HEK293 (cell line): ENCODE measurements at regions of chr11 and their contacts with region 1.

Region 1: DNA sequence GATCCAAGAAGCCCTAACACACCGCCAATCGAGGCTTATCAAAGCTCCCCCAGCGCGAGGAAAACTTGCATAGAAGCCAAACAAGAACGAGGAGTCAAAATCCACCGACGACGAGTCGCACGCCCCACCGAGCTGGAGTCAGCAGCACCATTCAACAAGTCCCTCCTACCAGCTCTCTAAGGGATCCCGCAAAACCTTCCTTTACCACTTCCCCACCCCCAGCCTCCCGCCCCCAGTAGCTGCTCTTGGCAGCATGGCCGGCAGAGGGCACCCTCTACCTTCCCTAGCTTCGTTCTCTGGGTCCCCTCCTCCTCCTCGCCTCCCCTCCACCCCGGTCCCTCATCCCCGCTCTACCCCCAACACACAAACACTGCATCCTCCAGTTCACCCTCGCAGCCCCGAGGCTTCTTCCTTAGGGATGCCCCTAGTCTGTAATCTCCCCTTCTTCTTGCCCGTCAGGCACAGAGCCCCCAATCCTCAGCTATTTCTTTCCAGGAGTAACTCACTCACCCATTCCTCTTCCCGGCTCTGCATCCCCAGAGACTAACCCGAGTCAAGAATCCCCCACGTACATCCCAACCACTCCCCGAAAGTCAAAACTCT is 1.3 kb downstream of the BDNF start:
- H3K4me3 ChIP-seq: peak overlapping the region; percentile 88
- H3K27ac ChIP-seq: no peak overlapping the region; the same call in 1 of the 2 replicates
- H3K4me1 ChIP-seq: no peaks in the 10 kb centered on the region
- CTCF ChIP-seq: peak; percentile 67

Region 2: DNA sequence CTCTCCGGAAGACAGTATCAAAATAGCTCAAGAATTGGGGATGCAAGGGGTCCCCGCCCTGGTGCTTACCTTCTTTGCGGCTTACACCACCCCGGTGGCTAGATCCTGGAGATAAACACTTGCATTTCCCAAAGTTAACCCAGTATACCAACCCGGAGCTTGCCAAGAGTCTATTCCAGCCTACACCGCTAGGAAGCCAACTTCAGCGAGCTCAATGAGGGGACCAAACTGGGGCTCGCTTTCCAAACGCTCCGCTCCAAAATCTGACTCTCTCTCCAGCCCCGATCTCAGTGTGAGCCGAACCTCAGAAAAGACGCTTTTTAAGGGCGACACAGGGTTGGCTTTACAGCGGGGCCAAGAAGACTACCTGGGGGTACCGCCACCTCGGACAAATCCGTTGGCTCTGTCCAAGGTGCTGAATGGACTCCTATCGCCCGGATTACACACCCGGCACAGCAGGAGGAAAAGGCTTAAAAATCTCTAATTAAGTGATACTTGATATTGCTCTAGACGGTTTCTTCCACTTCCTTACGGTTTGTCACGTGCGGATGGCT is 21.4 kb after region 1 on chr11:
- CTCF ChIA-PET with region 1: interaction called, 23 read pairs
- POLR2A ChIA-PET with region 1: interaction called, 9 read pairs
- H3K4me3 ChIP-seq: no peak overlapping the region
- H3K27ac ChIP-seq: no peak overlapping the region
- H3K4me1 ChIP-seq: peaks cover 5% of the 10 kb centered on the region; the same call in 1 of the 2 replicates
- CTCF ChIP-seq: no peak

Region 3: DNA sequence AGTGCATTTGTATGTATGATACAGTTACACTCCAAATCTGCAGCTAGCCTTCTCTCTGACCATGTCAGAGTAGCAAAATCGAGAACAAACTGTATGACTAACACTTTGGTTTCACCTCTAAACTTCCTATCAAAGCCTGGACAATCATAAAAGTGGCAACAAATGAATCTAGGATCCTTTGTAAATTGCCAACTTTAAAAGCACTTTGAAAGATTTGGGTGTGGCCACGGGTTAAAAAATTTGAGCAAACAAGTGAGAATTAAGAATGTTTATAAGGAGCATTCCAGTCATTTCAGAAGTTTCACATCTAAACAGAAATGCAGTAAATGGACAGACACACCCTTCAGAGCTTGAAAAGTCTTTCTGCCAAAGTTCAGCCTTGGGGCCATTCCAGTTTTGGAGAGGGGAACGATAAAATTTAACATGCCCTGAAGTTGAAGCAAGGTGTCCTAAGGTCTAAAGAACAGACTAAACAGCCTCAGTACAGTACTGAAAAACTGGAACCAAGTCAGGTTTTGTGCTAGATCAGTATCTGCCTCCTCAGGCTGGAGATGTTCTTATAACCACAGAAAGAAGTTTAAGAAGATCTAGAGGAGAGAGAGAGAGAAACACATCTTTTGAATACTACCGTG is 183.2 kb after region 1 on chr11:
- CTCF ChIA-PET with region 1: no interaction called
- POLR2A ChIA-PET with region 1: no interaction called
- H3K4me3 ChIP-seq: no peak overlapping the region
- H3K27ac ChIP-seq: no peak overlapping the region
- H3K4me1 ChIP-seq: no peaks in the 10 kb centered on the region
- CTCF ChIP-seq: no peak

Region 4: DNA sequence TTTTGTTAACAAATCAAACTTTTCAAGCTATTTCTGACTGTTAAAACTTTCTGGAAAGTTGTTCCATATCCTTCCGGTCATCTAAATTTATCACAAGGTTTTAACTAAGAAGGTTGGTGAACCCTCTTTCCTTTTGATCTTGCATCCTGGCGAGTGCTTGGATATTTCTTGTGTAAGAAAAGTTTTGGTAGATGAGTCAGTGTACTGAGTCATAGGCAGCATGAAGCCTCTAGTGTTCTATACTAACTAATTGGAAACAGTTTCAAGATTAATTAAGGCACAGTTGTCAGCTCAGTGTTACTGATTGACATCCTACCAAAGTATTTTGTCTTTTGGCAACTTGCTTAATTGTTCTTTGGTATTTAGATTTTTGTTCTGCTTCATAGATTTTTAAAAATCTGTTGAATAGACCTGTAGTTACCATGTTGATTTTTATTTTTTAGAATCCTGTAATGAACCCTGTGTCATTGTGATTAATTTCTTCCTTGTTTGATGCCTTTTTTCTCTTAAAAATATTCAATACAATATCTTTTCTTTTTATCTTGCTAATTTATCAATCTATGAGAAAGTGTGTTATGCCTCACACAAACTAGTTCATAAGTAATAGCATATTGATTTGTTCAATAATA is 447.3 kb after region 1 on chr11:
- CTCF ChIA-PET with region 1: no interaction called
- POLR2A ChIA-PET with region 1: no interaction called
- H3K4me3 ChIP-seq: no peak overlapping the region
- H3K27ac ChIP-seq: no peak overlapping the region
- H3K4me1 ChIP-seq: no peaks in the 10 kb centered on the region; the same call in 1 of the 2 replicates
- CTCF ChIP-seq: no peak

Region 5: DNA sequence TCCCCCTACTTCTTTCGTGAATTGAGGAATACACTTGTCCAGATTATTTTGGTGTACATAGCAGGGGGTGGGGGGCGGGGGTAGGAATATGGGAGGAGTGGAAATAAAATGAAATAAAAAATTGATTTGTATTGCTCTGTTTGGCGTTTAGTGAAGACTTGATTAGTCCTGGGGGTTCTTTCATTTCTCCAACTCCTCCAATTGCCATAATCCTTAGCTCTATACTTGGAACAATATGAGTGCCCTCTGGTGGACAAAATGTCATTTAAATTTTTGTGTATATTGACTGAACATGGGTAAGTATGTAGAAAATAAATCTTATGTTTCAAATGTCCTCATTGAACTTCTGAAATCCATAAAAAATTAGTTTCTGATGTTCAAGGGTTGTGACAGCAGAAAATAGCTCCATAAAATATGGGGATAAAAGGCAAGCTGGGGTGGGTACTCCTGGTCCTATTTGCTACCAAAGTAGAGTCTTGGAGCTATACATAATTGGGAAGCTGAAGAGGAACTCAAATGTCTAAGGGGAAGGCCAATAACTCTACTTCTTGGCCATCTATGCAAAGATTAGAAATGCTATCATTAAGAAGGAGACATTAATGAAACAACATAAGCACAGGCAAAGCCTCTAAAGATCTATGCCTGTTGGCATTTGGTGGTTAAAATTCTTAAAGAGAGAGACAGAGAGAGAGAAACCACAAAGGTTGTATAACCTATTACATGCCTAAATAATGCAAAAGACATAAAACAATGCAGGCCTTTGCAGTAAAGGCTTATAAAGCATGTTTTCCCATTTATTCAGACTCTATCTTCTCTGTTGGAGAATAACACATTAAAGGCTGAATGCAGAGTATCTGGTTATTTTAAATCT is 830.8 kb after region 1 on chr11:
- CTCF ChIA-PET with region 1: interaction called, 21 read pairs
- POLR2A ChIA-PET with region 1: no interaction called
- H3K4me3 ChIP-seq: no peak overlapping the region
- H3K27ac ChIP-seq: no peak overlapping the region
- H3K4me1 ChIP-seq: no peaks in the 10 kb centered on the region
- CTCF ChIP-seq: no peak

Region 6: DNA sequence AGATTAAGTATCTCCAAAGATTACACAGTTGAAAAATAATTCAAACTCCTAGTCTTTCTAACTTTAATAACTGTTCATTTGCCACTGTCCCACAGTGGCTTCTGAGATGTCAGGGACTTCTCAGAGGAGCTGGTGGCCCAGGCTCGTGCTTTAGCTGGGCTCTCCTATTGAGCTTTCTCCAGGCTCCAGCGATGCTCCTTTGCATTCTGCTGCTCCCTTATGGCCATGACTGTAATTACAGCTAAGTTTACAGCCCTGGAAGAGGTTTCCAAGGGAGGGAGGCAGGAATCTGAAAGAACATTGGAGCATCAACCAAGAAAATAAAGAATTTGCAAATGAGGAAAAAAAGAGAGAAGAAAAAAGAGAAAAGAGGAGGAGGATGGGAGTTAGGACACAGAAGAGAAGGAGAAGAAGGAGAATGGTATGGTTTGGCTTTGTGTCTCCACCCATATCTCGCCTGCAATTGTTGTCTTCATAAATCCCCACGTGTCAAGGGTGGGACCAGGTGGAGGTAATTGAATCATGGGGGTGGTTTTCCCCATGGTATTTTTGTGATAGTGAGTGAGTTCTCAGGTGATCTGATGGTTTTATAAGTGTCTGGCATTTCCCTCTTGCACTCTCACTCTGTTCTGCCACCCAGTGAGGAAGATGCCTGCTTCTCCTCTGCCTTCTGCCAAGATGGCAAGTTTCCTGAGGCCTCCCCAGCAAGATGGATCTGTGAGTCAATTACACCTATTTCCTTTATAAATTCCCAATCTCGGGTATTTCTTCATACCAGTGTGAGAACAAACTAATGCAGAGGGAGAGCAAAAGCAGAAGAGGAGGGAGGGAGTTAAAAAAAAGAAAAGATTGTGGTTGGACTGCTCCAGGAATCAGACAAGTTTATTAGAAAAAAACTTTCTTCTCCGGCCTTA is 1460.8 kb after region 1 on chr11:
- CTCF ChIA-PET with region 1: interaction called, 10 read pairs
- POLR2A ChIA-PET with region 1: no interaction called
- H3K4me3 ChIP-seq: no peak overlapping the region
- H3K27ac ChIP-seq: no peak overlapping the region
- H3K4me1 ChIP-seq: no peaks in the 10 kb centered on the region
- CTCF ChIP-seq: 0 out of 2 replicates have a peak, but pooled peaks have one; percentile 11

Region 7: DNA sequence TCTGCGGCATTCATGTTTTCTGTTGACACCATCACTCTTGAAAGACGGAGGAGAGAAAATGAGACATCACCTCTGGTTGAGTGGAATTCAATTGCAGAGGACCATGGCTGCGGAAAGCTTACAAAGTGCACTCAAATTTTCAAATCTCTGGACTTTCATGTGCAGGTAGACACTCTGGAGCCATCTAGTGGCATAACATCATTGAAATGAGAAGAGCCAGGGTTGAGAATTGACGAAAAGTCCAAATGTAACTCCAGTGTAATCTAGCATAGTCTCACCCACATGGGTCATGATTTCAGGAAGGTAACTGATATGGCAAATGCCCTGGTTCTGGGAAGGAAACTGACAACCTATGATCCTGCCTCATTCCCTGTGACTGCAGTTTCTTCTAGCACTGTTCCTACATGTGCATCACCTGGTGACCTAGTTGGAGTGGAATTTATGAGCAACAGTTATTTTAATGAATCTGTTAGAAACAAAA is 1630.0 kb after region 1 on chr11:
- CTCF ChIA-PET with region 1: interaction called, 19 read pairs
- POLR2A ChIA-PET with region 1: interaction called, 5 read pairs
- H3K4me3 ChIP-seq: no peak overlapping the region
- H3K27ac ChIP-seq: no peak overlapping the region
- H3K4me1 ChIP-seq: no peaks in the 10 kb centered on the region
- CTCF ChIP-seq: no peak

Region 8: GRCh38 chr11:29333993-29334775 is 1635.2 kb after region 1 on chr11:
- CTCF ChIA-PET with region 1: interaction called, 19 read pairs
- POLR2A ChIA-PET with region 1: interaction called, 5 read pairs
- H3K4me3 ChIP-seq: no peak overlapping the region
- H3K27ac ChIP-seq: no peak overlapping the region
- H3K4me1 ChIP-seq: no peaks in the 10 kb centered on the region
- CTCF ChIP-seq: no peak